Endothelial cell of umbilical vein (primary cell): ENCODE measurements at regions of chr19 and their contacts with region 1.

Region 1: DNA sequence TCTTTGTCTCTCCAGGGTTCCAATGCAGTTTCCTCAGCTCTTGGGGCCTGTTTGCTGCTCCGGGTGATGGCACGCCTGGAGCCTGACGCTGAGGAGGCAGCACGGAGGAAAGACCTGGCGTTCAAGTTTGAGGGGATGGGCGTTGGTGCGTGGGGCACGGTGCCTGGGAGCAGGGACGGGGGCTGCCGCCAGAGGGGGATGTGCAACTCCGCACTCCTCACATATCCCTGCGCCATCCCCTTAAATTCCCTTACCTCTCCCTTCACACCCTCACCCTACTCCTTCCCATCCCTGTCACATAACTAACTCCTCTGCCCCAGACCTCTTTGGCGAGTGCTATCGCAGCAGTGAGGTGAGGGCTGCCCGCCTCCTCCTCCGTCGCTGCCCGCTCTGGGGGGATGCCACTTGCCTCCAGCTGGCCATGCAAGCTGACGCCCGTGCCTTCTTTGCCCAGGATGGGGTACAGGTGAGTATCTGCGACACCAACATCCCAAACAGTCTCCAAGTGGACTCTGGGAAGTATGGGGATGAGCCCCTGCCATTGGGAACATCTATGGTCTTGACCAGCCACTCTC is 31.1 kb downstream of the TRPM4 start:
- DNase-seq: no peak
- H3K4me3 ChIP-seq: no peak overlapping the region
- H3K27ac ChIP-seq: no peak overlapping the region
- H3K4me1 ChIP-seq: peaks cover 9% of the 10 kb centered on the region
- H3K27me3 ChIP-seq: no peaks in the 10 kb centered on the region
- CTCF ChIP-seq: no peak
- POLR2A ChIP-seq: no peak

Region 2: DNA sequence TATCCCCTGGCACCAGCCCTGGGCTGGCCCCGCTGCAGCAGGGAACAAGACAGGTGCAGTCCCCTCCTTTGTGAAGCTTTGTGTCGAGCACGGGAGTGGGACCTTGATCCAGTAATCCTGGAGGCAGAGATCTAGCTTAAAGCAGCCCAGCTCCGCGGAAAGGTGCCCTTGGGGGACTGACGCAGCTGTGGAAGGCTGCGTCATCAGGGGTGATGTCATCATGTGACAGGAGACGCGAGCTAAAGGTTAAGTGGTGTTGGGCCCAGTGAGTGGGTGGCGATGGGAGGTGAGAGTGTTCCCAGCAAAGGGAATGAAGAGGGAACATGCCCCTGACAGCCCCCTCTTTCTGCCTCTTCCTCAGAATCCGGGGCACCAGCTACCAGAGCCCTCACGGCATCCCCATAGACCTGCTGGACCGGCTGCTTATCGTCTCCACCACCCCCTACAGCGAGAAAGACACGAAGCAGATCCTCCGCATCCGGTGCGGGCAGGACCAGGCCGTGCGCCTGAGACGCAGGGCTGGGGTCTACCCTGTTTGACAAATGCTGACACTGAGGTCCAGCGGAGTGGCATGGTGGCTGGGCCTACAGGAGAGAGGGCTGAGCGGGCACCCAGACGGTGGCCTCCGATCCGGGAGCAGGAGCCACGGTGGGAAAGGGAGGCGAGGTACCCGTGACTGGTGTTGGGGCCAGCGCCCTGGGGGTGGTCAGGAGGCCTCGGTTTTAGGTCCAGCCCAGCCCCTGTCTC is 174.4 kb before region 1 on chr19:
- CTCF ChIA-PET with region 1: no interaction called
- POLR2A ChIA-PET with region 1: no interaction called
- dilution Hi-C with region 1: no loop called
- intact Hi-C with region 1: no loop called
- DNase-seq: no peak
- H3K4me3 ChIP-seq: no peak overlapping the region
- H3K27ac ChIP-seq: no peak overlapping the region
- H3K4me1 ChIP-seq: peaks cover 10% of the 10 kb centered on the region
- H3K27me3 ChIP-seq: no peaks in the 10 kb centered on the region
- CTCF ChIP-seq: no peak
- POLR2A ChIP-seq: no peak

Region 3: GRCh38 chr19:49165111-49165750 is 23.5 kb before region 1 on chr19:
- CTCF ChIA-PET with region 1: interaction called, 3 read pairs
- POLR2A ChIA-PET with region 1: no interaction called
- dilution Hi-C with region 1: no loop called
- intact Hi-C with region 1: loop called (anchors 1 kb)
- DNase-seq: peak; percentile 85
- H3K4me3 ChIP-seq: no peak overlapping the region
- H3K27ac ChIP-seq: peak overlapping the region; percentile 47
- H3K4me1 ChIP-seq: peaks cover 12% of the 10 kb centered on the region
- H3K27me3 ChIP-seq: no peaks in the 10 kb centered on the region
- CTCF ChIP-seq: no peak
- POLR2A ChIP-seq: no peak